Prostate gland (tissue), 2 donors: ENCODE measurements at regions of chr21 and their contacts with region 1.

Region 1: GRCh38 chr21:15592271-15592860 is 137.4 kb upstream of the USP25 start:
- DNase-seq: peak; percentile 21
- H3K4me3 ChIP-seq: no peak overlapping the region
- H3K27ac ChIP-seq: no peak overlapping the region
- H3K4me1 ChIP-seq: no peaks in the 10 kb centered on the region
- H3K27me3 ChIP-seq: no peaks in the 10 kb centered on the region
- CTCF ChIP-seq: peak in 3 of 4 experiments; percentile 60 to 72 (median 66)
- POLR2A ChIP-seq: no peak

Region 2: DNA sequence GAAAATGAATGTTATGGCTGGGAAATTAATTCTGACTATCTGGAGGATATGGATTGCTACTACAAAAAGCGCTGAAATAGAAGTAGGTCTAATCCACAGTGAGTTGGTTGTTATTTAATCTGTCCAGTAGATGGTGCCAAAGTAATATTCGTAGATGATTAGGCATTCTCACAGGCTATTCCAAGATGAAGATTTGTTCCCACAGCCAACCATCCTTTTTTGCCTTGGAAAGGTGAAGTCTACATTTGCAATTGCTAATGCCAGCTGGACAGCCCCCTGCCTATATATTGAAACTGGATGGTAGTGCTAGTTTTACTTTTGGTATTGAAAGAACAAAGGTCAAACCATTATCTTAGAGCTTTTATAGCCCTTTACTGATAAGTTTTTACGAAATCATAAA is 1332.6 kb before region 1 on chr21:
- intact Hi-C with region 1: loop called (anchors 5 kb)
- DNase-seq: no peak
- H3K4me3 ChIP-seq: no peak overlapping the region
- H3K27ac ChIP-seq: no peak overlapping the region
- H3K4me1 ChIP-seq: no peaks in the 10 kb centered on the region
- H3K27me3 ChIP-seq: no peaks in the 10 kb centered on the region
- CTCF ChIP-seq: peak in 3 of 4 experiments; percentile 37 to 63 (median 48)
- POLR2A ChIP-seq: no peak

Region 3: DNA sequence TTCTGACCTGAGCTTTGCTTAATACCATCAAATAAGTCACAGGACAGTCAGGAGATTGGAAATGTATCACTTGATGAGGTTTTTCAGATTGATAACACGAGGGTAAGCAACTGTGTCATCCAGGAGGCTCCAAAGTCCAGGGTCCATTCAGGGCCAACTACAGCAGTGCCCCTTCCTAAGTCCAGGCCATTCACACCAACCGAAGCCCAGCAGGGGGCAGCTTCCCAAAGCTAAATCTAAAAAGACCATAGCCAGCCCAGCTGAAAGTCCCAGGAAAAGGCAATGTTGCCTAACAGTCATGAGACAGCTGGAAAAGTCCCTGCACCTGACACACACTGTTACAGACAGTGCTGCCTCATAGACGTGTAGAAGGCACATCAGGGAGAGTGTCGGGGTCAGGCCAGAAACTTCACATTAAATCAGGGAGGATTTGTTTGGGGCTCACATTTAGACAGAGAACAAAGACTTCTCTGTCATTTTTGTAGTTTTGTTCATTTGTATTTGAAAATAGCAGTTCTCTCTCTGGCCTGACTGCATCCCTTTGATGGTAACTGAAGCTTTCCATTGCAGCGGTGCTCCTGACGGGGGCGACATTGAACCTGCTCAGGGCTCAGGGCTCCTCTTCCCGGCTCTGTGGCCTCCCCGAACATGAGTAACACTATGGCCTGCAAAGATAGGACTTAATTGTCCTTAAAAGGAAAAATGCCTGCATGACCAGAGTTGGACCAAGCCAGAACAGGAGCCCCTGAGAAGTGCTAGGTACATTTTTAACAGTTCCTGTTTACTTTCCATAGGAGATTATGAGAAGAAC is 728.0 kb before region 1 on chr21:
- intact Hi-C with region 1: loop called (anchors 5 kb)
- DNase-seq: peak; percentile 57
- H3K4me3 ChIP-seq: no peak overlapping the region
- H3K27ac ChIP-seq: peak overlapping the region in 1 of 2 donors; percentile 33
- H3K4me1 ChIP-seq: no peaks in the 10 kb centered on the region
- H3K27me3 ChIP-seq: no peaks in the 10 kb centered on the region
- CTCF ChIP-seq: peak in 3 of 4 experiments; percentile 30 to 58 (median 53)
- POLR2A ChIP-seq: no peak